Activated CD4-positive, alpha-beta memory T cell treated with anti-CD3 and anti-CD28 coated beads for 36 hours (primary cell): ENCODE measurements at regions of chr18 and their contacts with region 1.

Region 1: DNA sequence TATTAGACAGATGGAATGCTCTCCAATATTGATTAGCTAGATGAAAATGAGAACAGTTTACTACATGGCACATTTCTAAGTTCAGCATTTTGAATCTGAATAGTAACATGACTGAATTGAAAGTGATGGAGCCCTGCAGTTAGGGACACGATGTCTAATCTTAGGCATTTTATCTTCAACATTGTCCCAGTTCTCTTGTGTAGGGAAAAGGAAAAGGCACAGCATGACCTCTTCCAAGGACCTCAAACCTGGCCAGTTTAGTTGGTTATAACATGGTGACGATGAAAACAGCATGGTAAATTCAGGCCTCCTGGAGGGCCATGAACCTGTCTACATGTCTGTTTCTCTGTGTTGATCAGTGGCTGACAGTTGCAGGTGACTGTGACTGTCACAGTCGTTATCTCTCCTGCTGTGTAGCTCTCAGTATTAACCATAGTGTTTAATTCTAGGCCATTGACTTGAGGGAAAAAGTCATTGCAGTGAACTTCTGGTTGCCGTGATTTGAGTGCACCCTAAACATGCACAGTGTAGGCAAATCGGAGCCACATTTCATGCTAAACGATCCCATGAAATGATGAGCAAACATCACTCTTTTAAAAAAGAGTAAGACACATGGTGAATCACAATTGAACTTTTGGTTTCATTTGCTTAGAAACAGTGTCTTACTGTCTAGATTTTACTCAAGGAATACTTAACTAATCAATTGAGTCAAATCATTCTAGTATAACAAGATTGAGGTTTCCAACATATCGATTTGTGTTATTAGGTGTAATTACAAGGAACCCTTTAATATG is 129.7 kb downstream of the PHLPP1 start:
- DNase-seq: peak; percentile 69
- H3K4me3 Mint-ChIP-seq: peak overlapping the region; percentile 45
- H3K27ac Mint-ChIP-seq: peak overlapping the region; percentile 90
- H3K4me1 Mint-ChIP-seq: peaks cover 41% of the 10 kb centered on the region
- H3K27me3 Mint-ChIP-seq: no peaks in the 10 kb centered on the region

Region 2: DNA sequence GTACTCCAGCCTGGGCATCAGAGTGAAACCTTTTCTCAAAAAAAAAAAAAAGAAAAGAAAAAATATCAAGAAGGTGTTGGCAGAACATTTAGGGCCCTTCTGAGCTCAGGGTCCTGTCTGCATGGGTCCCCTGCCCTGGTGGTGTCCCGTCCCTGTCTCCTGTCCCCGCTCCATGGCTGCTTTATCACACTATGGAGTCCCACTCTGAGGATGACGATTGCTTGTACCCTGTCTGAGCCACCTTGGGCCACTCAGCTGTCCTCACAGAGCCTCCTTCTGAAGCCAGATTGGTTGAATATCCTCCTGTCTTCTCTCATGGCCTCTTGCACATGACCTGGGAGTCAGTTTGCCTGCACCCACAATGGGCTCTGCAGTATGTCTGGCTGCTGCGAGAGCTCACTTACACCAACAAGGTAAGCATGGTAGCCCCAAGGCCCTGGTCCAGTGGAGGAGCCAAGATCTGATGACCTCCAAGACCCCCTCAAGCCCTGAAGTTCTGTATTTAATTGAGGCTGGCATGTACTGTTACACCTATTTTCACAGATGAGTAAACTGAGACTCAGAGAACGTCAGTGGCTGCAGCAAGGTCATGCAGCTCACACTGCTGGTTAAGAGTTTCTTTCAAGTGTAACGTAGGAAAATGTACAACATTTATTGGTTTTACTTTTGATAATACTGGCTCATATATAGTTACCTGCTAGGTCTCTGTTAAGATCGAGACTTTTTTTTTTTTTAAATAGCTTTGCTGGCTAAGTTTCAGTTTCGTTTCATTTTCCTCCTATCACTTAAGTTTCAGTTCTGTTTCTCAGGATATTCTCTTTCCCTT is 339.2 kb before region 1 on chr18:
- CTCF ChIA-PET with region 1: no interaction called
- POLR2A ChIA-PET with region 1: no interaction called
- intact Hi-C with region 1: loop called (anchors 1 kb)
- DNase-seq: peak; percentile 66
- H3K4me3 Mint-ChIP-seq: peak overlapping the region; percentile 58
- H3K27ac Mint-ChIP-seq: peak overlapping the region; percentile 88
- H3K4me1 Mint-ChIP-seq: peaks cover 24% of the 10 kb centered on the region
- H3K27me3 Mint-ChIP-seq: no peaks in the 10 kb centered on the region

Region 3: GRCh38 chr18:62741118-62741566 is 103.9 kb before region 1 on chr18:
- CTCF ChIA-PET with region 1: no interaction called
- POLR2A ChIA-PET with region 1: no interaction called
- intact Hi-C with region 1: loop called (anchors 1 kb)
- DNase-seq: peak; percentile 26
- H3K4me3 Mint-ChIP-seq: no peak overlapping the region
- H3K27ac Mint-ChIP-seq: peak overlapping the region; percentile 36
- H3K4me1 Mint-ChIP-seq: peaks cover 20% of the 10 kb centered on the region
- H3K27me3 Mint-ChIP-seq: no peaks in the 10 kb centered on the region

Region 4: GRCh38 chr18:62784966-62785413 is 60.1 kb before region 1 on chr18:
- CTCF ChIA-PET with region 1: no interaction called
- POLR2A ChIA-PET with region 1: interaction called, 4 read pairs
- intact Hi-C with region 1: loop called (anchors 1 kb)
- DNase-seq: no peak
- H3K4me3 Mint-ChIP-seq: no peak overlapping the region
- H3K27ac Mint-ChIP-seq: peak overlapping the region; percentile 73
- H3K4me1 Mint-ChIP-seq: peaks cover 52% of the 10 kb centered on the region
- H3K27me3 Mint-ChIP-seq: peaks cover 3% of the 10 kb centered on the region

Region 5: DNA sequence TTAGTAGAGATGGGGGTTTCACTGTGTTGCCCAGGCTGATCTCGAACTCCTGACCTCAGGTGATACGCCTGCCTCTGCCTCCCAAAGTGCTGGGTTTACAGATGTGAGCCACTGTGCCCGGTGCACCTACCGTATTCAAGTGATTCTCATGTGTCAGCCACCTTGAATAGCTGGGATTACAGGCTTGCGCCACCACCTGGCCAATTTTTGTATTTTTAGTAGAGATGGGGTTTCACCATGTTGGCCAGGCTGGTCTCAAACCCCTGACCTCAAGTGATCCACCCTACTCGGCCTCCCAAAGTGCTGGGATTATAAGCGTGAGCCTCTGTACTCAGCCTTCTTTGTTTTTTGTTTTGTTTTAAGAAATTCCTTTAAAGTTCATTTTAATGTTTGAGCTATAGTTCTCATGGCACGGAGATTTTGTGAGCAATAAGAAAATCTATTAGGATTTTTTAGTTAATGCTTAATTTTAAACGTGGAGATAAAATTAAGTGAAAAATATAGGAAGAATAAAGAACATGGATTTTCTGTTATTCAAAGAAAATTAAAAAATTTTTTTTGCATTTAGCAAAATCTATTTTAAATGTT is 112.9 kb after region 1 on chr18:
- CTCF ChIA-PET with region 1: interaction called, 5 read pairs
- POLR2A ChIA-PET with region 1: no interaction called
- intact Hi-C with region 1: loop called (anchors 5 kb)
- DNase-seq: peak; percentile 68
- H3K4me3 Mint-ChIP-seq: no peak overlapping the region
- H3K27ac Mint-ChIP-seq: no peak overlapping the region
- H3K4me1 Mint-ChIP-seq: peaks cover 5% of the 10 kb centered on the region
- H3K27me3 Mint-ChIP-seq: no peaks in the 10 kb centered on the region